AG04449 (cell line): ENCODE measurements at regions of chr10 and their contacts with region 1.

Region 1: GRCh38 chr10:102352066-102352715 is 43.3 kb upstream of the NFKB2 start:
- DNase-seq: no peak
- H3K4me3 ChIP-seq: no peak overlapping the region
- CTCF ChIP-seq: peak; percentile 83

Region 2: GRCh38 chr10:102167861-102168260 is 184.3 kb before region 1 on chr10:
- CTCF ChIA-PET with region 1: interaction called, 95 read pairs
- POLR2A ChIA-PET with region 1: no interaction called
- DNase-seq: no peak
- H3K4me3 ChIP-seq: no peak overlapping the region
- CTCF ChIP-seq: no peak

Region 3: DNA sequence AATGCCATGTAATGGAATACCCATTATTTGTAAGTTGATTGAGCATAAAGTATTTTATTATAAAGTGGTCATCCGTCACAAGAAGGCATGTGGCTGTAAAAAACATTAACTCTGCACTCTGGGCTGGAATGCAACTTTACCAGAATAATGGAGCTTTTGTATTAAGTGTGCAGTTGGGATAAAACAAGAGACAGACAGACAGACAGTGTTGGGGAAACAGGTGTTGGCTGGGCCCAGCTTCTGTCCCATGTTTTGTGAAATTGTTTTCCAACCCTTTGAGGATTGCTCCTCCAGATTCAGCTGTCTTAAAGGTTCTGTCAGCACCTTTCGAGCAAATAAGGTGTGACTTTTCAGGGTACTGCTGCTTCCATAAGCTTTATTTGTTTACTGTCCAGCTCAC is 24.6 kb before region 1 on chr10:
- CTCF ChIA-PET with region 1: interaction called, 17 read pairs
- POLR2A ChIA-PET with region 1: no interaction called
- DNase-seq: no peak
- H3K4me3 ChIP-seq: no peak overlapping the region
- CTCF ChIP-seq: no peak

Region 4: GRCh38 chr10:102368072-102368471 is 15.9 kb after region 1 on chr10:
- CTCF ChIA-PET with region 1: interaction called, 179 read pairs
- POLR2A ChIA-PET with region 1: no interaction called
- DNase-seq: no peak
- H3K4me3 ChIP-seq: no peak overlapping the region
- CTCF ChIP-seq: no peak

Region 5: GRCh38 chr10:102384053-102384452 is 31.9 kb after region 1 on chr10:
- CTCF ChIA-PET with region 1: interaction called, 31 read pairs
- POLR2A ChIA-PET with region 1: interaction called, 3 read pairs
- DNase-seq: no peak
- H3K4me3 ChIP-seq: no peak overlapping the region
- CTCF ChIP-seq: peak; percentile 26

Region 6: DNA sequence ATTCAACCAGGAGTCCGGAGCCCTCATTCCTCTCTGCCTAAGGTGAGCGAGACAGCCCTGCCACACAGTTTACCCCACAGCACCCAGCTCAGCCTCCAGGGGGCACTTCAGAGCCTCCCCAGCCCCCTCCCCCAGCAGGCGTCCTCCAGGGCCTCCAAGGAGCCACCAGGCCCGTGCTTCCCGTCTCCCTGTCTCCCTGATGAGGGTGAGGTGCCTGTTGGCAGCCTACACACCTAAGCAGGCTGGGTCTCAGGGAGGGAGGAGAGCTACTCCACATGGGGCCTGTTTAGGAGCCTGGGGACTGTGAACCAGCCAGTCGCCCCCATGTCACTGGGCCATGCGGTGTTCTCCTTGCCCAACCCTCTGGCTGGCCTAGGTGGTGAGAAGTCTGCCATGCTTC is 263.2 kb after region 1 on chr10:
- CTCF ChIA-PET with region 1: no interaction called
- POLR2A ChIA-PET with region 1: no interaction called
- DNase-seq: no peak
- H3K4me3 ChIP-seq: no peak overlapping the region
- CTCF ChIP-seq: peak; percentile 57

Region 7: DNA sequence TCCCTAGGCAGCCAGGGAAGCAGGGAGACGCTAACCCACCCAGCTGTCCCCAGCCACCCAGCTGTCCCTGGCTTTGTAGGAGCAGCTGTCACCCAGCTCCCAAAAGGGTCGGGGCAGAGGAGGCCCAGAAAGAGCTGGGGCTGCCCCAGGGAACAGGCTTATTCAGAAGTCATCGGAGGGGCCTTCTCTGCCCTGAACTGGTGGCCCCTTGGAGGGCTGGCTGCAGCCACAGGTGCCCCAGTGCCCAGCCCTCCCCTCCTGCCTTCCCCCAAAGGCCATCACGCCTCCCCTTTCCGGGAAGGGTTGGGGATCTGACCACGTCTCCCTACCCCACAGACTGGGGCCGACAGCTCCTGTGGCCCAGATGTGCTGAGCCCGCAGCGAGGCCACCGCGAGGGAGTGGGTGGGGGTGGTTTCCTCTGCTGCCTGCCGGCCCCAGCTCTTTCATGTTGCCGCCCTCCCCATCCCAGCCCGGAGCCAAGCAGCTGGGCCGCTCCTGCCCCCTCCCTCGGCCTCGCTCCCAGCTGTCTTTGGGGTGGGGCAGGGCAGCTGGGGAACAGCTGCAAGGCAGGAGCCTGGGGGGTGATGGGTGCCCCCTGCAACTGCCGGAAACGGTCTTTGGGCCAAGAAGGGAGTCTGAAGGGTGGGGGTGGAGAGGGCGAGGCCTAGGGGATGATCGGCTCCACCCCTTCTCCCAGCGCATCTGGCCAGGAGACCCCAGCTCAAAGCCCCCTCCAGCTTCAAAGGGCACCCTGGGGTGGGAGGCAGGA is 308.9 kb after region 1 on chr10:
- CTCF ChIA-PET with region 1: no interaction called
- POLR2A ChIA-PET with region 1: no interaction called
- DNase-seq: no peak
- H3K4me3 ChIP-seq: no peak overlapping the region
- CTCF ChIP-seq: no peak